Right ventricle myocardium inferior (tissue), 1 donor: ENCODE measurements at regions of chr9 and their contacts with region 1.

Region 1: GRCh38 chr9:125746017-125746773 is 978 bp upstream of the PBX3 start:
- DNase-seq: peak; percentile 98
- ATAC-seq: peak; percentile 96

Region 2: GRCh38 chr9:125558453-125559092 is 187.6 kb before region 1 on chr9:
- intact Hi-C with region 1: loop called (anchors 5 kb)
- DNase-seq: no peak
- ATAC-seq: peak; percentile 74

Region 3: GRCh38 chr9:125706661-125707471 is 39.3 kb before region 1 on chr9 and contains the start of gene MAPKAP1:
- intact Hi-C with region 1: loop called (anchors 5 kb)
- DNase-seq: peak; percentile 99
- ATAC-seq: peak; percentile 100
- total RNA-seq, gene MAPKAP1: 122 TPM

Region 4: DNA sequence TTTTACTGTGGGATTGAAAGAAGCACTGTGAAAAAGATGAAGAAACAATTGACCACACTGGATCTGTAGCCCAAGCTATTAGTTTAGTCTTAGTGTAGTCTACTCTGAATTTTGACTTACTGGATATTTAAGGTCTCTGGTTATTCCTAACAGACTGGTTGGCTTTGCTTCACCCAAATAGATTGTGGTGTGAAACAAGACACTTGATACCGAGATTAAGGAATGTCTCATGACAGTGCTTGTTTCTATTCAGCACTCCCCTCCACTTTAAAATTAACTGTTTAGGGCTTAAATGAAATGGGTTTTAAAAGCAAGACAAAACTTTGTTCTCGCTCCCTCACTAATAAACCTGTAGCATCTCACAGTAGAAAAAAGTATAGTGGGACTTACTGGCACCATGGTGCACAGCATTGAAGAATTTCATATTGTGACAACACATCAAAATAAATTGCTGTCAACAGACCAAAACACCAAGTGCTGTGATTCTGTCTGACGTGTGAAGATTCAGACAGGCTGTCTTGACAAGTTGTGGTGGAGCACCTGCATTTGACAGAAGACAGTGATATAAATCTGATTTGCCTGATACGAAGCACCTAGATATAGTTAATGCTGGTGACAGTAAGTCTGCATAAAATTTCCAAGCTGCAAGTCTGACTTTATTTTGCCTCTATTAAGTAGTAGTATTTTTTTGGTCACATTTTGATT is 74.1 kb after region 1 on chr9:
- intact Hi-C with region 1: loop called (anchors 5 kb)
- DNase-seq: no peak
- ATAC-seq: peak; percentile 62

Region 5: GRCh38 chr9:125889476-125890419 is 143.6 kb after region 1 on chr9:
- intact Hi-C with region 1: loop called (anchors 2 kb)
- DNase-seq: peak; percentile 59
- ATAC-seq: peak; percentile 74

Region 6: GRCh38 chr9:126956917-126957686 is 1210.9 kb after region 1 on chr9:
- intact Hi-C with region 1: no loop called
- DNase-seq: no peak
- ATAC-seq: peak; percentile 67